Right ventricle myocardium inferior (tissue), 1 donor: ENCODE measurements at regions of chr3 and their contacts with region 1.

Region 1: GRCh38 chr3:123341871-123342642 is 106.8 kb downstream of the ADCY5 start:
- DNase-seq: no peak
- ATAC-seq: no peak

Region 2: GRCh38 chr3:123286308-123287023 is 55.6 kb before region 1 on chr3:
- intact Hi-C with region 1: no loop called
- DNase-seq: no peak
- ATAC-seq: no peak

Region 3: DNA sequence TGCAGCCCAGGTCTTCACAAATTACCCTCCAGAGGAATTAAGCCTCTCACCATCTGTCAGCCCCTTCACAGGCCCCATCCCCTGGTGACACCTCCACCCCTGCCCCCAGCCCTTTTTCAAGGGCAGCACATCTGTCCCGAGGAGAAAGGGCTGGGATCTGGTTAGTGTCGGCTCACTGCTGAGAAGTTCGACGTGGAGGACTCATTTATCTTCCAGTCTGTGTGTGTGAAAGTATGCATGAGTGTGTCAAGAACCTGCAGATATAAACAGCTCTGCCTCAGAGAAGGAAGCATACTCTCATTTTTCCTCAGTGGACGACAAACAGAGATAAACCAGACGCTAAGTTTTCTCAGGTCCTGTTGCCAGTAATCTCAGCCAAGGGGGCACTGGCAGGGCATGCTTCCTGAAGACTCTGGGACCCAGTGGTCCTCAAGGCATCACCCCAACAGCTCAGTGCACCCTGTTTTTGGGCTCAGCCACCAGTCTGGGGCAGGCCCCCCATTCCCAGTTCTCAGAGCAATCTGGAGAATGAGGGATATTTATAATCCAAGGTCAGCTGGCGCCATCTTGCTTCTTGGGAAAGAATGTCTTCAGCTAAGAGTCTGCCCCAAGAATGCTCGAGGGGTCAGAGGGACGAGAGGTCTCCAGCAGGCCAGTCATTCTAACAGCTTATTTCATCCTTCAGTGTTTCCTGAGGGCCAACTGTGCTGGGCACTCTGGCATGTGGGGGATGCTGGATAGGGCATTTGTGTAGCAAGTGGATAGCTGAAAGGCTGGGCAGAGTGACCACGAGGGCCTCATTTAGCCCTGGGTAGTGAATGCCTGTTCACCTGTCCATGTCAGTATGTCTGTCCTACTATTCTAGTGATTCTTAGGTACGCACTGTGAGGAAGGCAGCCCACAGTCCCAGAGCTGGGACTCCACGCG is 33.2 kb after region 1 on chr3:
- intact Hi-C with region 1: loop called (anchors 2 kb)
- DNase-seq: no peak
- ATAC-seq: peak; percentile 50